MCF 10A (cell line): ENCODE measurements at regions of chr4 and their contacts with region 1.

Region 1: DNA sequence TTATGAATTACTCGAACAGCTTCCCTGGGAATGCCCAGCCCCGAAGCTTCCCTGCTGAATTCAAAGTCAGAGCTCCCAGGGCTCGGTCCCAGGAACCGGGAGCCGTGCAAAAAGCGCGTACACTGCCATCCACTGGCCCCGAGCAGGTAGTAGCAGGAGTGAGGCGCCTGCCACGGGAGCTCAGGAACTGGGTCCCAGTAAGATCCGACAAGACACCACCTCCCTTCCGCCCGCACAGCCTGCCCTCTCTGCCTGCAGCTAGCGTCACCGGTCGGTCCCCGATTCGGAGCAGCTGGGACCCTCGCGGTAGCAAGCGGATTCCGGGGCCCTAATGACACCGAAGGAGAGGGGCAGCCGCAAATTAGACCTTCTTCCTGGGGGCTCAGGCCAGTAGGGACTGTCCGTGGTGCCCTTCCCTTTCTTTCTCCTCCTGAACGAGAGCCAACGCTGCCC is 1.2 kb downstream of the CORIN start:
- DNase-seq: peak; percentile 84
- H3K4me3 Mint-ChIP-seq: peak overlapping the region; percentile 75
- H3K27ac Mint-ChIP-seq: no peak overlapping the region
- H3K4me1 Mint-ChIP-seq: no peaks in the 10 kb centered on the region
- H3K27me3 Mint-ChIP-seq: no peaks in the 10 kb centered on the region
- CTCF ChIP-seq: peak; percentile 72

Region 2: DNA sequence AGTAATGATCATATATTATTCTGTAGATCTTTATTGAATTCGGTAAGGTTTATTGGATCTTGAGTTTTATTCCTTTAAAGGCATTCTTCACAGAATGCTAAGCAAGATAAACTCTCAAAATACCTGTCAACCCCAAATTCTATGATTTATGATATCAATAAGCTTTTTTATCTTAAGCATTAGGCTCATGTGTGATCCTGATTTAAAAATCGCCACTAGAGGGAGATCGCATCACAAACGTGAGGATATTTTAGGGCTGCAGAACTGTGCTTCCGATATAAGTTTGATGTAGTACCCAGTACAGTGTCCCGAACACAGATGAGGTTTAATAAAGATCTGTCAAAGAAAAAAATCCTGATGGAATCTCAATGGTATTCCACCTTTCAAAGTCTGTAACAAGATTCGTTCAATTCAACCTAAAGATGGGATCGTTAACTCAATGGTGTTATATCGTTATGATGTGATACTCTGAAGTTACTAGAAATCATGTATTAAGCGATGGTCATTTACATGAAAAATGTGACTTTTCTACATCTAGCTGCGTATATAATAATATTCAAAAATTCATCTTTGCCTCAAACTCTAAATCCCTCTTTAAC is 167.8 kb before region 1 on chr4:
- CTCF ChIA-PET with region 1: interaction called, 102 read pairs
- POLR2A ChIA-PET with region 1: interaction called, 10 read pairs
- intact Hi-C with region 1: loop called (anchors 1 kb)
- DNase-seq: peak; percentile 64
- H3K4me3 Mint-ChIP-seq: no peak overlapping the region
- H3K27ac Mint-ChIP-seq: no peak overlapping the region
- H3K4me1 Mint-ChIP-seq: peaks cover 5% of the 10 kb centered on the region
- H3K27me3 Mint-ChIP-seq: no peaks in the 10 kb centered on the region
- CTCF ChIP-seq: peak; percentile 72

Region 3: GRCh38 chr4:47692639-47693180 is 144.0 kb before region 1 on chr4:
- CTCF ChIA-PET with region 1: interaction called, 18 read pairs
- POLR2A ChIA-PET with region 1: interaction called, 3 read pairs
- intact Hi-C with region 1: no loop called
- DNase-seq: no peak
- H3K4me3 Mint-ChIP-seq: no peak overlapping the region
- H3K27ac Mint-ChIP-seq: no peak overlapping the region
- H3K4me1 Mint-ChIP-seq: no peaks in the 10 kb centered on the region
- H3K27me3 Mint-ChIP-seq: no peaks in the 10 kb centered on the region
- CTCF ChIP-seq: no peak

Region 4: DNA sequence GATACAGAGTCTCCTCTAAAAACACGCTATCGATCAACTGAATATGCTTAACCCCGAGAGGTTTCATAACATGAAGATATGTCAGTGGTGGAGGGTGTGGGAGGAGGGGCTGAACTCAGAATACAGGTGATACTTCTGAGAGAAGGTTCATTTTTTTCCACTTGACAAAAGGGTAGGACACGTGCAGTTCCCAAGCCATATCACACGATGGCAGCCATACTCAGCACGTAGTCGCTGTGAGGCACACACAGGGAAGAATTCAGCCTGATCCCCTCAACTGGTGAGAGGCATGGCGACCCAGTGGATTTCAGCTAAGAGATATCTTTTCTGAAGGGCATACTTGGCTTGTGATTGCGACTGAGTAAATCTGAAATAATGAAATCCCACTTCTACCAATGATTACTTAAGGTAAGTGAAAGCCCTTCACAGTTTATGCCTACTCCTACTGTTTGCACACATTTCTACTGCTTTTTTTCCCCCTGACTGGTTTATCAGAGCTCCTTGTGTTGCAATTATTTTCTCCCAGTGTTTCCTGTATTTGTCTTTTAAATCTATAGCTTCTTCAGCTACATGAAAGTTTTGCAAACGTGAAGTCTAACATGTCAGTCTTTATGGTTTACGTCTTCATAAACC is 131.9 kb before region 1 on chr4:
- CTCF ChIA-PET with region 1: interaction called, 181 read pairs
- POLR2A ChIA-PET with region 1: interaction called, 6 read pairs
- intact Hi-C with region 1: loop called (anchors 1 kb)
- DNase-seq: peak; percentile 28
- H3K4me3 Mint-ChIP-seq: no peak overlapping the region
- H3K27ac Mint-ChIP-seq: no peak overlapping the region
- H3K4me1 Mint-ChIP-seq: peaks cover 5% of the 10 kb centered on the region
- H3K27me3 Mint-ChIP-seq: no peaks in the 10 kb centered on the region
- CTCF ChIP-seq: peak; percentile 46

Region 5: GRCh38 chr4:47824840-47825239 is 11.8 kb before region 1 on chr4:
- CTCF ChIA-PET with region 1: interaction called, 13 read pairs
- POLR2A ChIA-PET with region 1: no interaction called
- intact Hi-C with region 1: no loop called
- DNase-seq: no peak
- H3K4me3 Mint-ChIP-seq: no peak overlapping the region
- H3K27ac Mint-ChIP-seq: no peak overlapping the region
- H3K4me1 Mint-ChIP-seq: peaks cover 8% of the 10 kb centered on the region
- H3K27me3 Mint-ChIP-seq: no peaks in the 10 kb centered on the region
- CTCF ChIP-seq: no peak

Region 6: GRCh38 chr4:48085821-48086607 is 249.3 kb after region 1 on chr4:
- CTCF ChIA-PET with region 1: interaction called, 3 read pairs
- POLR2A ChIA-PET with region 1: interaction called, 3 read pairs
- intact Hi-C with region 1: loop called (anchors 5 kb)
- DNase-seq: peak; percentile 17
- H3K4me3 Mint-ChIP-seq: no peak overlapping the region
- H3K27ac Mint-ChIP-seq: no peak overlapping the region
- H3K4me1 Mint-ChIP-seq: peaks cover 6% of the 10 kb centered on the region
- H3K27me3 Mint-ChIP-seq: no peaks in the 10 kb centered on the region
- CTCF ChIP-seq: no peak